Naive thymus-derived CD4-positive, alpha-beta T cell (primary cell): ENCODE measurements at regions of chr12 and their contacts with region 1.

Region 1: GRCh38 chr12:49223122-49223521 is 34.2 kb upstream of the TUBA1A start:
- DNase-seq: no peak
- ATAC-seq: no peak
- H3K4me3 ChIP-seq: no peak overlapping the region
- H3K4me3 Mint-ChIP-seq: no peak overlapping the region
- H3K27ac ChIP-seq: no peak overlapping the region
- H3K27ac Mint-ChIP-seq: no peak overlapping the region
- H3K4me1 ChIP-seq: no peaks in the 10 kb centered on the region
- H3K4me1 Mint-ChIP-seq: peaks cover 0 to 20% (median 0%) of the 10 kb centered on the region in 7 donors
- H3K27me3 ChIP-seq: no peaks in the 10 kb centered on the region
- H3K27me3 Mint-ChIP-seq: peaks cover 0 to 7% (median 0%) of the 10 kb centered on the region in 5 donors

Region 2: DNA sequence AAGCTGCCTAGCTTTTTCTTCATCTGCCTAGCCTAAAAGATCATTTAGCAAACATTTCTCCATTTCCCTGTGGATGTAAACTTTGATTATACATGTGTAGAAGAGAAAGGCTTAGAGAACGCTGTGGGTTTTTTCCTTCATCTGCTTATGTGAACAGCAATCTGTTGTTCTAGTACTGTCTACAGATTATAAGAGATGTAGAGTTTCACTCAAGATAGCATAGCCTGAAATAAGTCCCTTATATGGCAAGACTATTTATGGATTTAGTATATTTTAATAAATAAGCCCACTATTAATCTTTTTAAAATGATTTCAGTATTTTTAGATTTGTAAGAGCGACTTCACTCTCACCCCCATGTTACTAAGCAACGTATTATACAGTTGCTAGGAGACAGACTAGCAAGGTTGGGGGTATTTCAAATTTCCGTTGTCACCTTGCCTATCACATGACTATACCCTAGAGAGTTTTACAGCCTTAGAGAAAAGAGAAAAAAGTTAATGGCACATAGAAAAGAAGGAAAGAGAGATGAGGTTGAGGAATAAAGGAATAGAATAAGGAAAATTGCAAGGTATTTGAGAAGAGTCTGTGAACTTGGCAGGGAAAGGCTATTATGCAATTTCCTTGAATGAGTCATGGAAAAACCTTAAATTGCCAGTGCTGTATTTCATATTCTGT is 22.1 kb before region 1 on chr12:
- CTCF ChIA-PET with region 1: interaction called, 10 read pairs
- POLR2A ChIA-PET with region 1: interaction called, 3 read pairs
- intact Hi-C with region 1: no loop called
- DNase-seq: peak in 6 of 9 donors; percentile 30 to 64 (median 46)
- ATAC-seq: peak; percentile 92
- H3K4me3 ChIP-seq: no peak overlapping the region
- H3K4me3 Mint-ChIP-seq: no peak overlapping the region
- H3K27ac ChIP-seq: no peak overlapping the region
- H3K27ac Mint-ChIP-seq: peak overlapping the region in 4 of 9 donors; percentile 4 to 75 (median 22)
- H3K4me1 ChIP-seq: peaks cover 0 to 6% of the 10 kb centered on the region in 2 donors
- H3K4me1 Mint-ChIP-seq: peaks cover 7 to 15% (median 14%) of the 10 kb centered on the region in 7 donors
- H3K27me3 ChIP-seq: no peaks in the 10 kb centered on the region
- H3K27me3 Mint-ChIP-seq: peaks cover 0 to 19% (median 0%) of the 10 kb centered on the region in 5 donors

Region 3: DNA sequence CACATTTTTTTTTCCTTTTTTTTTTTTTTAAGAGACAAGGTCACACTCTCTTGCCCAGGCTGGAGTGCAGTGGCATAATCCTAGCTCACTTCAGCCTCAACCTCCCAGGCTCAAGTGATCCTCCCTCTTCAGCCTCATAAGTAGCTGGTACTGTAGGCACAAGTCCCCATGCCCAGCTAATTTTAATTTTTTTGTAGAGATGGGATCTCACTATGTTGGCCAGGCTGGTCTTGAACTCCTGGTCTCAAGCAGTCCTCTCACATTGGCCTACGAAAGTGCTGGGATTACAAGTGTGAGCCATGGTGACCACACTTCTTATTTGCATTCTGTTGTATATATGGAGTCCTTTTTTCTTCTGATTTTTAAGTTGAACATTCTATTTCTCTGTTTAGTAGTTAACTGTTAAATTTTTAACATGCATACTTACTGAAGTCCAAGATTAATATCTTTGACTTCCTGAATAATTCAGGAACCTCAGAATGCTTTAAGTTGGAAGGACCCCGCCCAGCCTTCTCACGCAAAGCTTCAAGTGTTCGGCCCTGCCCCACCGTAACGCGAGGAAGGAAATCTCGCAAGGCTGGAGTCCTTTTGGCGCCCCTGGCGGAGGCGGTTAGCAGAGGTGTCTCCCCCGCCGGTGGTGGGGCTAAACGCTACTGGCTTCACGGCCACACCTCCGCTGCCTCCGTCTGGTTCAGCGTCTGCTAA is 165.7 kb after region 1 on chr12:
- CTCF ChIA-PET with region 1: no interaction called
- POLR2A ChIA-PET with region 1: no interaction called
- intact Hi-C with region 1: no loop called
- DNase-seq: peak; percentile 29 to 66 (median 56)
- ATAC-seq: peak; percentile 96
- H3K4me3 ChIP-seq: no peak overlapping the region
- H3K4me3 Mint-ChIP-seq: peak overlapping the region in 9 of 10 donors; percentile 12 to 74 (median 63)
- H3K27ac ChIP-seq: no peak overlapping the region
- H3K27ac Mint-ChIP-seq: peak overlapping the region in 1 of 9 donors; percentile 36
- H3K4me1 ChIP-seq: no peaks in the 10 kb centered on the region
- H3K4me1 Mint-ChIP-seq: peaks cover 0 to 11% (median 4%) of the 10 kb centered on the region in 7 donors
- H3K27me3 ChIP-seq: no peaks in the 10 kb centered on the region
- H3K27me3 Mint-ChIP-seq: no peaks in the 10 kb centered on the region